Sciatic nerve (tissue), 2 donors: ENCODE measurements at regions of chr6 and their contacts with region 1.

Region 1: DNA sequence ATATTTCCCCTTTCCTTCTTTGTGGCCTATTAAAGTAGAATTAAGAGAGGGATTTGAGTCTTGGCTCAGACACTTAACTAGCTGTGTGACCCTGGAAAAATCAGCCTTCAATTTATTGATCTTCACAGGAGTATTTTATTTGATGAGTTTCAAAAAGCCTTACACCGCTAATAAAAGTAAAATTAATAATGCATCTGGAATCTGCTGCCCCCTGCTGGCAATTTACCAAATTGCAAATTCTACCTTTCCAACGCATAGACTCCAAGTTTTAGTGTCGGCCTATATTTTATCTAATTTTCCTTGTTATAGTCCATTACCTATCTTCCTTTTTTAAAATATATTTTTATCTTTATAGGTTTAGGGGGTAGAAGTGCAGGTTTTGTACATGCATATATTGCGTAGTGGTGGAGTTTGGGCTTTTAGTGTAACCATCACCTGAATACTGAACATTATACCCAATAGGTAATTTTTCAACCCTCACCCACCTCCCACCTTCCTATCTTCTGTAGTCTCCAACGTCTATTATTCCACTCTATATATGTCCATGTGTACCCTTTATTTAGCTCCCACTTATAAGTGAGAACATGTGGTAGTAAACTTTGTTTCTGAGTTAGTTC is 46.3 kb downstream of the GOPC start:
- DNase-seq: peak; percentile 67
- ATAC-seq: no peak

Region 2: DNA sequence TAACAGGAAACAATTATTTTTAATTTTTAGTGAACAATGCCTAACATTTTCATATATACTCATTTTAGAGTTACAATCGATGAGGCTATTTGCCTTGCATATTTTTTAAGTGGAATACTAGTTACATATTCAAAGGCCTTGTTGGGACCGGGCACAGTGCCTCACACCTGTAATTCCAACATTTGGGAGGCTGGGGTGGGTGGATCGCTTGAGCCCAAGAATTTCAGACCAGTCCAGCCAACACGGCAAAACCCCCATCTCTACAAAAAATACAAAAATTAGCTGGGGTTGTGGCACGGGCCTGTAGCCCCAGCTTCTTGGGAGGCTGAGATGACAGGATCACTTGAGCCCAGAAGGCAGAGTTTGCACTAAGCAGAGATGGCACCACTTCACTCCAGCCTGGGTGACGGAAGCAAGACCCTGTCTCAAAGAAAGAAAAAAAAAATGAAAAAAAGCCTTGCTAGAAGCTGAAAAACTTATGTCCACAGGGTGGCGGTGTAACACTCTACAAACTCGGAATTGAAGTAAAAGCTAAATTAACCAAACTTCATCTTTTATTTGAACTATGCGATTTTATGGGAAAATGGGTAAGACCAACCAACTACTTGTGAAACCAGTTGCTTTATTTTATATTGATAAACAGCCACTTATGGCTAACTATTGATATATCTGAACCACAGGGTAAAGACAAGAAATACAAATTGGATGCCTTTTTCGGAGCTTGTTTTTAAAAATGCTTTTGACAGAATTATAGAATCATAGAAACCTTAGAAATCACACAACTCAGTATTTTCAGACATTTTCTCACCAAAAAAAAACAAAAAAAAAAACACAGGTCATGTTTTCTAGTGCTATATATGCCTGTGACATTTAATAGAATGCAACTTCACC is 106.2 kb before region 1 on chr6:
- intact Hi-C with region 1: loop called (anchors 5 kb)
- DNase-seq: peak; percentile 71
- ATAC-seq: peak; percentile 53